MCF 10A (cell line): ENCODE measurements at regions of chr4 and their contacts with region 1.

Region 1: GRCh38 chr4:185096032-185096653 is 46.9 kb upstream of the SLC25A4 start:
- DNase-seq: peak; percentile 74
- H3K4me3 Mint-ChIP-seq: no peak overlapping the region
- H3K27ac Mint-ChIP-seq: no peak overlapping the region
- H3K4me1 Mint-ChIP-seq: no peaks in the 10 kb centered on the region
- H3K27me3 Mint-ChIP-seq: no peaks in the 10 kb centered on the region
- CTCF ChIP-seq: peak; percentile 52

Region 2: GRCh38 chr4:184745831-184746795 is 350.0 kb before region 1 on chr4:
- CTCF ChIA-PET with region 1: interaction called, 26 read pairs
- POLR2A ChIA-PET with region 1: interaction called, 4 read pairs
- intact Hi-C with region 1: loop called (anchors 2 kb)
- DNase-seq: peak; percentile 76
- H3K4me3 Mint-ChIP-seq: peak overlapping the region; percentile 38
- H3K27ac Mint-ChIP-seq: peak overlapping the region; percentile 84
- H3K4me1 Mint-ChIP-seq: peaks cover 26% of the 10 kb centered on the region
- H3K27me3 Mint-ChIP-seq: no peaks in the 10 kb centered on the region
- CTCF ChIP-seq: peak; percentile 57

Region 3: GRCh38 chr4:185011408-185011807 is 84.7 kb before region 1 on chr4:
- CTCF ChIA-PET with region 1: interaction called, 13 read pairs
- POLR2A ChIA-PET with region 1: interaction called, 3 read pairs
- intact Hi-C with region 1: no loop called
- DNase-seq: peak; percentile 43
- H3K4me3 Mint-ChIP-seq: no peak overlapping the region
- H3K27ac Mint-ChIP-seq: no peak overlapping the region
- H3K4me1 Mint-ChIP-seq: no peaks in the 10 kb centered on the region
- H3K27me3 Mint-ChIP-seq: peaks cover 76% of the 10 kb centered on the region
- CTCF ChIP-seq: peak; percentile 25

Region 4: GRCh38 chr4:185108669-185109068 is 12.5 kb after region 1 on chr4:
- CTCF ChIA-PET with region 1: interaction called, 27 read pairs
- POLR2A ChIA-PET with region 1: no interaction called
- intact Hi-C with region 1: no loop called
- DNase-seq: no peak
- H3K4me3 Mint-ChIP-seq: no peak overlapping the region
- H3K27ac Mint-ChIP-seq: no peak overlapping the region
- H3K4me1 Mint-ChIP-seq: peaks cover 5% of the 10 kb centered on the region
- H3K27me3 Mint-ChIP-seq: no peaks in the 10 kb centered on the region
- CTCF ChIP-seq: no peak

Region 5: DNA sequence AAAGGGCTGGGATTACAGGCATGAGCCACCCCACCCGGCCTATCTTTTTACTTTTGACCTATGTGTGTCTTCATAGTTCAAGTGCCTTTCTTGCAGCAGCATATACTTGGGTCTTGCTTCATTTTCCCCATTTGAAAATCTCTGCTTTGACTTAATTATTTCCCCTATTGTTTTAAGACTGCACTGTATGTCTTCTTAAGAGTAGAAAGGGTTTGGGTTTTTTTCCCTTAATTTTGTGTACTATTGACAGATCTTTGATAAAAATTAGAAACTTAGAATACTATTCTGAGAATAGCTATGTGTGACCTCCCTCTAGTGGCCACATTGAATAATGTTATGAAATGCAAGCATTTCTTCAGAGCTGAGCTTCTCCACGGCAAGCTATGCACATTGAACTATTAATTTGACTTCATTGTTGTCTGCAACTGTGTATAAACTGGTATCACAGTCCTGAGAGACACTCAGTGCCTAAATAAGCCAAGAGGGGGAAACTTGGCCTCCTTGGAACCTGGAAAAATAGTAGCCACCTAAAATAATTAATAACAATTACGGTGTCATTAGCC is 38.2 kb after region 1 on chr4:
- CTCF ChIA-PET with region 1: interaction called, 15 read pairs
- POLR2A ChIA-PET with region 1: no interaction called
- intact Hi-C with region 1: loop called (anchors 1 kb)
- DNase-seq: peak; percentile 61
- H3K4me3 Mint-ChIP-seq: no peak overlapping the region
- H3K27ac Mint-ChIP-seq: no peak overlapping the region
- H3K4me1 Mint-ChIP-seq: no peaks in the 10 kb centered on the region
- H3K27me3 Mint-ChIP-seq: no peaks in the 10 kb centered on the region
- CTCF ChIP-seq: peak; percentile 64